B cell (primary cell): ENCODE measurements at regions of chr19 and their contacts with region 1.

Region 1: GRCh38 chr19:6516659-6517291 is 14.1 kb upstream of the TNFSF9 start:
- DNase-seq: peak; percentile 91
- ATAC-seq: peak; percentile 58
- H3K4me3 ChIP-seq: peak overlapping the region; percentile 31 to 74 (median 68)
- H3K4me3 Mint-ChIP-seq: peak overlapping the region; percentile 92
- H3K27ac ChIP-seq: peak overlapping the region in 1 of 2 donors; percentile 16
- H3K27ac Mint-ChIP-seq: peak overlapping the region; percentile 73
- H3K4me1 ChIP-seq: peaks cover 22 to 47% of the 10 kb centered on the region in 2 donors
- H3K4me1 Mint-ChIP-seq: peaks cover 38% of the 10 kb centered on the region
- H3K27me3 ChIP-seq: no peaks in the 10 kb centered on the region
- H3K27me3 Mint-ChIP-seq: no peaks in the 10 kb centered on the region
- CTCF ChIP-seq: peak; percentile 97

Region 2: DNA sequence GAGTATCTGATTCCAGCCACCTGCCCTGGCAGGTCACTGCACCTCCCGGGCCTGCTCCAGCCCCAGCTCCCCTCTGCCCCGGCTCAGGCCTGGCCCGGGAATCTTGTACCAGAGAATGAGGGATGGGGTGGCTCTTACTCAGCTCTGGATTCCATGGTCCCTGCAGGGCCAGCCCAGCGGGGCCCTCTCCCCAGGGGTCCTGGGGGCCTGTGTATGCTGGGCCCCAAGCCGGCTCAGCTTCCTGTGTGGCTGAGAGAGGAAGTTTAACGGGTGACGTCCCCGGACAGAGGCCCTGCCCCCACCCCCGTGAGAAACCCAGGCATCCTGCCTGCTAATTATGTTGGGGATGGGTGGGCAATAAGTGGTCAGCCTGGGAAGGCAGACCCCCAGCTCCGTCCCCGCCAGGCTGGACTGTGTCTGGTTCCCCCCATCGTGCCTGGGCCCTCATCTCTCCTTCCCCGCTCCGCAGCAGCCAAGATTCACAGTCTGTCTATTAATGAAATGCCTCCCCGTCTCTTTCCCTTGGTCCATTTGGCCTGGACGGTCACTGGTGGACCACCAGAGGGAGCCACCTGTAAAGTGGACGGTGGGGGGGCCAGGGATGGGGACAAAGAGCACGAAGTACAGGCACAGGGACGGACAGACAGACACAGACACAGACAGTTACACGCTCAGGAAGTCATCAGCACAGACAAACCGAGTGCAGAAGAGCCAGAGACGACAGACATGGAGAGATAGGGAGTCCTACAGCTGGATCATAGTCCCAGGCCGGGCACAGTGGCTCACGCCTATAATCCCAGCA is 35.0 kb before region 1 on chr19 and contains the start of gene DENND1C:
- CTCF ChIA-PET with region 1: interaction called, 6 read pairs
- POLR2A ChIA-PET with region 1: interaction called, 7 read pairs
- intact Hi-C with region 1: loop called (anchors 2 kb)
- DNase-seq: peak; percentile 82
- ATAC-seq: peak; percentile 98
- H3K4me3 ChIP-seq: peak within 1 kb of the TSS; percentile 61 to 97 (median 73)
- H3K4me3 Mint-ChIP-seq: peak within 1 kb of the TSS; percentile 98
- H3K27ac ChIP-seq: peak within 1 kb of the TSS; percentile 89 to 95
- H3K27ac Mint-ChIP-seq: peak within 1 kb of the TSS; percentile 95
- H3K4me1 ChIP-seq: peaks cover 13 to 23% of the 10 kb centered on the region in 2 donors
- H3K4me1 Mint-ChIP-seq: peaks cover 26% of the 10 kb centered on the region
- H3K27me3 ChIP-seq: no peaks in the 10 kb centered on the region
- H3K27me3 Mint-ChIP-seq: no peaks in the 10 kb centered on the region
- CTCF ChIP-seq: no peak
- total RNA-seq, gene DENND1C: 117 and 119 TPM in 2 replicates

Region 3: GRCh38 chr19:6564393-6564792 is 47.6 kb after region 1 on chr19:
- CTCF ChIA-PET with region 1: interaction called, 11 read pairs
- POLR2A ChIA-PET with region 1: interaction called, 3 read pairs
- intact Hi-C with region 1: no loop called
- DNase-seq: peak; percentile 42
- ATAC-seq: peak; percentile 14
- H3K4me3 ChIP-seq: no peak overlapping the region
- H3K4me3 Mint-ChIP-seq: no peak overlapping the region
- H3K27ac ChIP-seq: no peak overlapping the region
- H3K27ac Mint-ChIP-seq: no peak overlapping the region
- H3K4me1 ChIP-seq: no peaks in the 10 kb centered on the region
- H3K4me1 Mint-ChIP-seq: no peaks in the 10 kb centered on the region
- H3K27me3 ChIP-seq: peaks cover 0 to 8% (median 0%) of the 10 kb centered on the region in 4 experiments
- H3K27me3 Mint-ChIP-seq: peaks cover 18% of the 10 kb centered on the region
- CTCF ChIP-seq: no peak

Region 4: GRCh38 chr19:6626764-6627163 is 110.0 kb after region 1 on chr19:
- CTCF ChIA-PET with region 1: interaction called, 49 read pairs
- POLR2A ChIA-PET with region 1: interaction called, 11 read pairs
- intact Hi-C with region 1: no loop called
- DNase-seq: no peak
- ATAC-seq: no peak
- H3K4me3 ChIP-seq: no peak overlapping the region
- H3K4me3 Mint-ChIP-seq: no peak overlapping the region
- H3K27ac ChIP-seq: no peak overlapping the region
- H3K27ac Mint-ChIP-seq: no peak overlapping the region
- H3K4me1 ChIP-seq: peaks cover 5 to 8% of the 10 kb centered on the region in 2 donors
- H3K4me1 Mint-ChIP-seq: peaks cover 15% of the 10 kb centered on the region
- H3K27me3 ChIP-seq: no peaks in the 10 kb centered on the region
- H3K27me3 Mint-ChIP-seq: peaks cover 10% of the 10 kb centered on the region
- CTCF ChIP-seq: no peak

Region 5: DNA sequence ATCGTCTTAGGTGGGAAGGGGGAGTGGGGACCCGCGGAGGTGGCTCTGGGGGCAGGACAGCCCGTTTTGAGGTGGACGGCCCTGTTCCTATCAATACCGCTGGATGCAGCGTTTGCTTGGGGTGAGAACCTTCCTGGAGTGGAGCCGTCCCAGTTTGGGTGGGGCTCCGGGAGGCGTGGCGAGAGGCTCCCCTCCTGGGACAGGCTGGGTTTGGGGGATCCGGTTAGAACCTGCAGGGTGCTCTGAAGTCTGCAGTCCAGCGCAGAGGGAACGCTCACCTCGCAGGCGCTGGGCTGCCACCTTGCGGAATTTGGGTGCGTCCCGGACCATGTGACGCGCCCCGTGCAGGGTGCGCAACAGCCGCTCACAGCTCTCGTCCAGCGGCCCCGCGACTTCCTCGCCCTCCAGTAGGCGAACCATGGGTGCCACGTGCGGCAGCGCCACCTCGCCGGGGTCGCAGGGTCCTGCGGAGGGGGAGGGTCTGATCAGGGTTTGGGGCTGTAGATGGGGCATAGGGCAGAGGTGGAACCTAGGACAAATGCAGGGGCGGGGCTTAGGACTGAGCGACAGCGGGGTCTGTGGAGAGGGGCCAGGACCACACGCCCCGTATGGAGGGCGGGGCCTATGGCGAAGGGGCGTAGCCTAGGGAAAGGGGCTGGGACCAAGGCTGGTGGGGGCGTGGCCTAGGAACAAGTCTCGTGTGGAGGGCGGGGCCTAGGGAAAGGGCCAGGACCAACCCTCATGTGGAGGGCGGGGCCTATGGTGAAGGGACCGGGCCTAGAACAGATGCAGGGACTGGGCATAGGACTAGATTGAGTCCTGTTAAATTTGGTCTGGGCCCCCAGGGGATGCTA is 236.6 kb after region 1 on chr19:
- CTCF ChIA-PET with region 1: interaction called, 13 read pairs
- POLR2A ChIA-PET with region 1: interaction called, 3 read pairs
- intact Hi-C with region 1: loop called (anchors 1 kb)
- DNase-seq: peak; percentile 92
- ATAC-seq: peak; percentile 91
- H3K4me3 ChIP-seq: peak overlapping the region in 4 of 5 experiments; percentile 41 to 65 (median 58)
- H3K4me3 Mint-ChIP-seq: peak overlapping the region; percentile 94
- H3K27ac ChIP-seq: peak overlapping the region in 1 of 2 donors; percentile 35
- H3K27ac Mint-ChIP-seq: peak overlapping the region; percentile 96
- H3K4me1 ChIP-seq: peaks cover 14 to 29% of the 10 kb centered on the region in 2 donors
- H3K4me1 Mint-ChIP-seq: peaks cover 26% of the 10 kb centered on the region
- H3K27me3 ChIP-seq: no peaks in the 10 kb centered on the region
- H3K27me3 Mint-ChIP-seq: no peaks in the 10 kb centered on the region
- CTCF ChIP-seq: peak; percentile 68

Region 6: DNA sequence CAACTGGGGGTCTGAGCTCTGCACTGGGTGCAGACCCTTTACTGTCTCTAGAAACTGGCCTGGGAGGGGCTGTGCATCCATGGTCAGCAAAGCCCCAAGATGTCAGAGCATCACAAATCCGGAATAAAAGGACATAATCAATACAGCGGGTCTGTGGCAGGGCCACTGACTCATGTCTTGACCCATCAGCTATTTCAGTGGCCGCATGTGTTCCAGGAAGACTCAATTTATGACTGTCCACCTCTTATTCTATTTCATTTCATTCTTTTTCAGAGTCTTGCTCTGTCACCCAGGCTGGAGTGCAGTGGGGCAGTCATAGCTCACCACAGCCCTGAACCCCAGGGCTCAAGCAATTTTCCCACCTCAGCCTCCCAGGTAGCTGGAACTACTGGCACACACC is 918.8 kb after region 1 on chr19:
- CTCF ChIA-PET with region 1: no interaction called
- POLR2A ChIA-PET with region 1: interaction called, 11 read pairs
- intact Hi-C with region 1: no loop called
- DNase-seq: no peak
- ATAC-seq: no peak
- H3K4me3 ChIP-seq: no peak overlapping the region
- H3K4me3 Mint-ChIP-seq: no peak overlapping the region
- H3K27ac ChIP-seq: no peak overlapping the region
- H3K27ac Mint-ChIP-seq: peak overlapping the region; percentile 6
- H3K4me1 ChIP-seq: no peaks in the 10 kb centered on the region
- H3K4me1 Mint-ChIP-seq: no peaks in the 10 kb centered on the region
- H3K27me3 ChIP-seq: no peaks in the 10 kb centered on the region
- H3K27me3 Mint-ChIP-seq: no peaks in the 10 kb centered on the region
- CTCF ChIP-seq: no peak